ENCODE measurements at regions of chr9 and their contacts with region 1.

Region 1: GRCh38 chr9:36873247-36873875 is 160.7 kb downstream of the PAX5 start:
- DNase-seq: peak; percentile 83
- ATAC-seq: peak; percentile 88
- H3K4me3 ChIP-seq: no peak overlapping the region
- H3K4me3 Mint-ChIP-seq: no peak overlapping the region
- H3K27ac ChIP-seq: peak overlapping the region; percentile 41 to 71
- H3K27ac Mint-ChIP-seq: peak overlapping the region; percentile 94
- H3K4me1 ChIP-seq: peaks cover 30 to 52% of the 10 kb centered on the region in 2 donors
- H3K4me1 Mint-ChIP-seq: peaks cover 66% of the 10 kb centered on the region
- H3K27me3 ChIP-seq: no peaks in the 10 kb centered on the region
- H3K27me3 Mint-ChIP-seq: no peaks in the 10 kb centered on the region
- CTCF ChIP-seq: peak; percentile 89

Region 2: DNA sequence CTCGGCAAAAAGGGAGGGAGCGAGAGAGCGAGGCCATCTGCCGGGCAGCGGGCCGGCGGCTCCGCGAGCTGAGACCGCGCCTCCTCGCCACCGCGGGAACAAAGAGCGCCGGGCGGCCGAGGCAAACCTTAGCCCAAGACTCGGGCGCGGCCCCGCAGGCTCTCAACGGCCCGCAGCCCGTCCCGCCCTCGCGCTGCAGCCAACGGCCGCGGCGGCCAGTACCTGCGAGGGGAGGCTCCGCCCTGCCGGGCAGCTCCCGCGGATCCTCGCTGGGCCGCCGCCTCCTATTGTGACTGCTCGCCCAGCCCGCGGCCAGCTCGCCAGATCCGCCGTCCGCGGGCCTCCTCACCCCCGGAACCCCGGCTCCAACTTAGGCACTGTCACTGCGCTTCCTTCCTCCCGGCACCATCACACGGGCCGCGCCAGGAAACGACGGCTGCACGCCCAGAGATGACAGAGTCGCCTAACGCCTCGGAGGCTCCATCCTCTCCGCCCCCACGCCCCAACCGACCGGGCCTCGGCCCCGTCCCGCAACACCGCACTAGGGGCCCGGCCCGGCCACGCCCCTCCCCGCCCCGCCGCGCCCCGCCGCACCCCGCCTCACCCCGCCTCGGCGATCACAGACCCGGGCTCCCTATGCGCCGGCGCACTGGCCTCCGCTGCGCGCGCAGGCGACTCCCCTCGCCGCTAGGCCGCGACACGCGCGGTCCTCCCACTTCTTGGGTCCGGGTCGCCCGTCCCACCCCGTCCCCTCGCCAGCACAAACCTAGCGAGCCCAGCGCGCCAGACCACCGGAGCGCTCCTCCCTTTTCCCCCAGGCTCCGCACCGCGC is 472.8 kb before region 1 on chr9:
- CTCF ChIA-PET with region 1: no interaction called
- POLR2A ChIA-PET with region 1: no interaction called
- intact Hi-C with region 1: loop called (anchors 10 kb)
- DNase-seq: peak; percentile 97
- ATAC-seq: peak; percentile 79
- H3K4me3 ChIP-seq: peak overlapping the region; percentile 72 to 90 (median 81)
- H3K4me3 Mint-ChIP-seq: peak overlapping the region; percentile 88
- H3K27ac ChIP-seq: peak overlapping the region; percentile 94 to 98
- H3K27ac Mint-ChIP-seq: peak overlapping the region; percentile 93
- H3K4me1 ChIP-seq: peaks cover 18 to 21% of the 10 kb centered on the region in 2 donors
- H3K4me1 Mint-ChIP-seq: peaks cover 34% of the 10 kb centered on the region
- H3K27me3 ChIP-seq: no peaks in the 10 kb centered on the region
- H3K27me3 Mint-ChIP-seq: no peaks in the 10 kb centered on the region
- CTCF ChIP-seq: no peak

Region 3: GRCh38 chr9:36935768-36936497 is 62.6 kb after region 1 on chr9:
- CTCF ChIA-PET with region 1: interaction called, 6 read pairs
- POLR2A ChIA-PET with region 1: no interaction called
- intact Hi-C with region 1: loop called (anchors 10 kb)
- DNase-seq: no peak
- ATAC-seq: peak; percentile 74
- H3K4me3 ChIP-seq: no peak overlapping the region
- H3K4me3 Mint-ChIP-seq: peak overlapping the region; percentile 27
- H3K27ac ChIP-seq: peak overlapping the region; percentile 9 to 60
- H3K27ac Mint-ChIP-seq: peak overlapping the region; percentile 88
- H3K4me1 ChIP-seq: peaks cover 33 to 66% of the 10 kb centered on the region in 2 donors
- H3K4me1 Mint-ChIP-seq: peaks cover 79% of the 10 kb centered on the region
- H3K27me3 ChIP-seq: no peaks in the 10 kb centered on the region
- H3K27me3 Mint-ChIP-seq: no peaks in the 10 kb centered on the region
- CTCF ChIP-seq: no peak

Region 4: DNA sequence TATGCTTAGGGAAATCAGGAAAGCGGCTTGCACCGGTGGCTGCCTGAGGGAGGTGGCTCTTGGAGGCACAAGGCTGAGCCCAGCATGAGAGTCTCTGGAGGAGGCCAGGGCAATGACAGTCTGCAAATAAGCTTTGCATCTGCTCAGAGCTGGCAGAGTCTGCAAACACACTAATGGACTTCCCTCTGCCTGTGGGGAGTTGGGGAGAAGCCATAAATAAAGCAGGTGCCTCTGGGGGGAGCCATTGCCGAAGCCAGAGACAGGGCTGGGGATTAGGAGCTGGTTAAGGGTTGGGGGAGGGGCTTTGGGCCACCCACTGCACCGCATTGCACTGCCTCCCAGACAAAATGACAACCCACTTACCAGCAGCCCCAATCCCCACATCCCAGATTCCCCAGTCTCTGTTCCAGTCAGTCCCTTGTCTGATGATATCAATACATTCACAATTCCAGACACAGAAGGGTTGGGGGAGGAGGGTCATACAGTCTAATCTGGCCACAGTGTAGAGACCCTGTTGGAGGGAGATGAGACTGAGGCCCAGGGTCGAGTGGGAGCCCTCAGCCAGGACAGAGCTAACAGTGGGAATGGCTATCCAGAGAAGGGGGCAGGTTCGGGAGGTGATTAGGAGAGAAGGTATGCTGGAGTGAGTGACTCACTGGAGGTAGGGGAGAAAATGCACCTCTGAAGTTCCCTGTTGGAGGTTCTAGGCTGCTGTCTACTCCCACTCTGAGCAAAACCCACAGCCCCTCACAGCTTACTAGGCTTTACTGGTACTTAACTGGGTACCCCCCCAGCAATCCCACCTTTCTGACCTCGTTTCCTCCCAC is 107.0 kb after region 1 on chr9:
- CTCF ChIA-PET with region 1: interaction called, 179 read pairs
- POLR2A ChIA-PET with region 1: no interaction called
- intact Hi-C with region 1: no loop called
- DNase-seq: peak; percentile 53
- ATAC-seq: peak; percentile 47
- H3K4me3 ChIP-seq: no peak overlapping the region
- H3K4me3 Mint-ChIP-seq: peak overlapping the region; percentile 8
- H3K27ac ChIP-seq: peak overlapping the region in 1 of 2 donors; percentile 74
- H3K27ac Mint-ChIP-seq: peak overlapping the region; percentile 78
- H3K4me1 ChIP-seq: peaks cover 53 to 73% of the 10 kb centered on the region in 2 donors
- H3K4me1 Mint-ChIP-seq: peaks cover 78% of the 10 kb centered on the region
- H3K27me3 ChIP-seq: no peaks in the 10 kb centered on the region
- H3K27me3 Mint-ChIP-seq: no peaks in the 10 kb centered on the region
- CTCF ChIP-seq: no peak

Region 5: DNA sequence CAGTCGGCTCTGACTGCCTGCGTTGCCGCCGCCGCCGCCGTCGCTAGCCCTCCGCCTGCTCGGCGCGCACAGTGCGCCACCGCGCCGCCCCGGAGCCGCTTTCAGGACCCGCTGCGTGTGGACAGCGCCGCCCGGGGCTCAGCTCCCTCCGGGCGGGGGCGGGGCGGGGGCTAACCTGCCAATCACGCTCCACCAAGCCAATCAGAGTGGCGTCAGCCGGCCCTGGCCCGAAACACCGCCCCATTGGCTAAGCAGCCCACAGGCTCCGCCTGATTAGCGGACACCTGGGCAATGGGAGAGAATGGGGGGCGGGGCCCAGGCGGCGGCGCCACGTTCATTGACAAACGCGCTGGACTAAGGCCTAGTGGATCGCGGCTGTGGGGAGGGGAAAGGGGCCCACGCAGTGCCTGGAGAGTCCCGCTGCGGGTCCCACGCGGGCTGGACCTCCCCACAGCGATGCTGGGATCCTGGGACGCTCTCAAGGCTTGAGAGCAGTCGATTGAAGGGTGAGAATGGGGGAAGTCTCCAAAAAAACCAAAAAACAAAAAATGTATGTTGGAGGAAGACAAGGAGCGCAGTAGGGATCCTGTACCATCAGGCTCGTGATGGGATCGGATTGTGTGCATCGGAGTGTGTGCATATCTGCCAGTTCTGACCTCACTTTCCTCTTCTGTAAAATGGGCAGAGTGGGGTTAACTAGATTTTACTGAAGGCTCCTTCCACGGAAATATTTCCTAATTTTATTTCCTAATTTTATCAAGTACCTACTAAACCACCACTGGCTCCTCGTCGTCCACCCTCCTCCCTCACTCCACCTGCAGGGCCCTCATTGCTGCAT is 154.4 kb after region 1 on chr9:
- CTCF ChIA-PET with region 1: interaction called, 5 read pairs
- POLR2A ChIA-PET with region 1: no interaction called
- intact Hi-C with region 1: loop called (anchors 1 kb)
- DNase-seq: peak; percentile 99
- ATAC-seq: peak; percentile 84
- H3K4me3 ChIP-seq: peak overlapping the region; percentile 5 to 95 (median 86)
- H3K4me3 Mint-ChIP-seq: peak overlapping the region; percentile 89
- H3K27ac ChIP-seq: peak overlapping the region; percentile 98 to 100
- H3K27ac Mint-ChIP-seq: peak overlapping the region; percentile 96
- H3K4me1 ChIP-seq: peaks cover 62 to 81% of the 10 kb centered on the region in 2 donors
- H3K4me1 Mint-ChIP-seq: peaks cover 78% of the 10 kb centered on the region
- H3K27me3 ChIP-seq: no peaks in the 10 kb centered on the region
- H3K27me3 Mint-ChIP-seq: no peaks in the 10 kb centered on the region
- CTCF ChIP-seq: no peak

Region 6: GRCh38 chr9:37329576-37329975 is 456.2 kb after region 1 on chr9:
- CTCF ChIA-PET with region 1: interaction called, 79 read pairs
- POLR2A ChIA-PET with region 1: interaction called, 4 read pairs
- intact Hi-C with region 1: loop called (anchors 1 kb)
- DNase-seq: peak; percentile 75
- ATAC-seq: peak; percentile 40
- H3K4me3 ChIP-seq: no peak overlapping the region
- H3K4me3 Mint-ChIP-seq: peak overlapping the region; percentile 44
- H3K27ac ChIP-seq: peak overlapping the region in 1 of 2 donors; percentile 4
- H3K27ac Mint-ChIP-seq: peak overlapping the region; percentile 90
- H3K4me1 ChIP-seq: peaks cover 25 to 84% of the 10 kb centered on the region in 2 donors
- H3K4me1 Mint-ChIP-seq: peaks cover 58% of the 10 kb centered on the region
- H3K27me3 ChIP-seq: no peaks in the 10 kb centered on the region
- H3K27me3 Mint-ChIP-seq: no peaks in the 10 kb centered on the region
- CTCF ChIP-seq: peak; percentile 82

Measured in B cell (primary cell).